ENCODE measurements at regions of chr22 and their contacts with region 1.

Region 1: DNA sequence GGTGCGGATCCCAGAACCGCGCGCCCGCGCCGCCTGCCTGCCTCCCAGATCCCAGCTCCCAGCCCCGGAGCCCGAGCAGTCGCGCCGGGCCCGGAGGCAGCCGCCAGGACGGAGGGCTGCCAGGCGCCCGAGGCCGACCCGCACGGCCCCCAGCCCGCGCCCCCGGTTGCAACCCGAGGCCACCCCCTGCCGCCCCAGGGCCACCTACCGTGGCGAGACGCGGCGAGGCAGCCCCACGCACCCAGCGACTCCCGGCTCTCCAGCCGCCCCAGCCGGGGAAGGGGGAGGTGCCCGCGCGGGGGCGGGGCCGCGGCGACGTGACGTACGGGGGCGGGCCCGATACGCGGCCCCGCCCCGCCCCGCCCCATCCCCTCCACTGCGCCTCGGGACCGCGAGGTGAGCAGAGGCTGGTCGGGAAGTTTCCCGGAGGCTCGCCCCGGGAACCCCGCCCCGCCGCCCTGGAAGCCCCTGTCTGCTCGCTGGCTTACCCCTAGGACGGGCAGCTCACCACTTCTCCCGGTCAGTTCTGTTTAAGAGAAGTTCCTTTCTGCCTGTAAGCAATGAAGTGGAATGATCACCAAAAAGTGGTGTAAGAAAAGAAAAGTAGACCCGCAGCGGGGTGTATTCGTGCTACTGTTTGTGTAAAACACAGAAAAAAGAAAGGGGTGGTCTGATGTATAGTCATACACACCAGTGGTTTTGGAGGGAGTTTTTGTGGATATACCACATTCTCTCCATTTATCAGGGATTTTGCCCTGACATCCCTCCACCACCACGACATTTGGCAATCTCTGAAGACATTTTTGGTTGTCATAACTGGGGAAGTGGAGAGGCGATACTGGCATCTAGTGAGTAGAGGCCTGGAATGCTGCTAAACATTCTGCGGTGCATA is at the start of gene TPST2:
- DNase-seq: peak; percentile 58 to 75
- ATAC-seq: peak; percentile 85 to 87
- H3K4me3 ChIP-seq: peak within 1 kb of the TSS; percentile 81 to 98 (median 96)
- H3K27ac ChIP-seq: peak within 1 kb of the TSS; percentile 93 to 97 (median 94)
- H3K4me1 ChIP-seq: peaks cover 18 to 19% of the 10 kb centered on the region in 2 donors
- H3K27me3 ChIP-seq: no peaks in the 10 kb centered on the region
- CTCF ChIP-seq: peak in 1 of 5 experiments; percentile 45
- POLR2A ChIP-seq: peak; percentile 96 to 97
- total RNA-seq, gene TPST2: 32.3 to 110 (median 65.4) TPM

Region 2: DNA sequence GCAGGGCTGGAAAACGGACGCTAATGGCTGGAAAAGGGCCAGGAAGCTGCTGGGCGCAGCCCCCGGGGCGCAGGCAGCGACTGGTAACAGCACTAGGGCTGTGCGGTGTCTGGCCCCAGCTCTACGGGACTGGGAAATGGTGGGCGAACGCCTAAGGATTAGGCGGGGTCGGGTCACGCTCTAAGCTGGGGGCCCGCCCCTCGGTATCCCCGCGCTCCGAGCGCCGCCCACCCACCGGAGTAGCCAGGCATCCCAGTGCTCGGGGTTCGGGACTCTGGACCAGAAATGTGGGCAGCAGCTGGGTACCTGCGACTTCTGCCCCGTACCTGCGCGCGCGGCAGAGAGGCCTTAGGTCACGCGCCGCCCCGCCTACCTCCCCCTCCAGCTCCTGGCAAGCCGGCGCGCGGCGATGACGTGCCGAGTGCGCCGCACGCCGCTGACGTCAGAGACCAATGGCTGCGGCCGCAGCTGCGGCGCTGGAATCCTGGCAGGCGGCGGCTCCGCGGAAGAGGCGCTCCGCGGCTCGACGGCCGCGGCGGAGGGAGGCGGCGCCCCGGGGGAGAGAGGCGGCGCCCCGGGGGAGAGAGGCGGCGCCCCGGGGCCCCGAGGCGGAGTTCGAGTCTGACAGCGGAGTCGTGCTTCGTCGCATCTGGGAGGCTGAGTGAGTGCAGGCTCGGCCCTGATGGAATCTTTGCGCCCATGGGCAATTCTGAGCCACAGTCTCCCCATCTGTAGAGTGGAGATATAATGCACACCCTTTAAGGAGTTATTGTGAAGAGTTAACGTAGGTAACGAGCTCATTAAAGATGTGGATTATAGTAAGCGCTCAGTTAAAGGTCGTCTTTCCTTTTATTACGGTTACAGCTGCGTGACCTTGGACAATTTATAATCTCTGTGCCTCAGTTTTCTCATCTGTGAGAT is 106.4 kb before region 1 on chr22 and contains the starts of genes HPS4 and SRRD:
- in situ Hi-C with region 1: loop called in 2 of 4 experiments (anchors 10 kb)
- intact Hi-C with region 1: loop called (anchors 1 kb)
- DNase-seq: peak; percentile 75 to 86
- ATAC-seq: peak; percentile 80 to 90
- H3K4me3 ChIP-seq: peak within 1 kb of the TSS; percentile 76 to 99 (median 86)
- H3K27ac ChIP-seq: peak within 1 kb of the TSS; percentile 93 to 100 (median 94)
- H3K4me1 ChIP-seq: peaks cover 54 to 60% of the 10 kb centered on the region in 2 donors
- H3K27me3 ChIP-seq: no peaks in the 10 kb centered on the region
- CTCF ChIP-seq: peak in 1 of 5 experiments; percentile 29
- POLR2A ChIP-seq: peak; percentile 95
- total RNA-seq, gene HPS4: 7.0 to 13.9 (median 10.5) TPM
- total RNA-seq, gene SRRD: 24.0 to 53.1 (median 27.4) TPM

Region 3: DNA sequence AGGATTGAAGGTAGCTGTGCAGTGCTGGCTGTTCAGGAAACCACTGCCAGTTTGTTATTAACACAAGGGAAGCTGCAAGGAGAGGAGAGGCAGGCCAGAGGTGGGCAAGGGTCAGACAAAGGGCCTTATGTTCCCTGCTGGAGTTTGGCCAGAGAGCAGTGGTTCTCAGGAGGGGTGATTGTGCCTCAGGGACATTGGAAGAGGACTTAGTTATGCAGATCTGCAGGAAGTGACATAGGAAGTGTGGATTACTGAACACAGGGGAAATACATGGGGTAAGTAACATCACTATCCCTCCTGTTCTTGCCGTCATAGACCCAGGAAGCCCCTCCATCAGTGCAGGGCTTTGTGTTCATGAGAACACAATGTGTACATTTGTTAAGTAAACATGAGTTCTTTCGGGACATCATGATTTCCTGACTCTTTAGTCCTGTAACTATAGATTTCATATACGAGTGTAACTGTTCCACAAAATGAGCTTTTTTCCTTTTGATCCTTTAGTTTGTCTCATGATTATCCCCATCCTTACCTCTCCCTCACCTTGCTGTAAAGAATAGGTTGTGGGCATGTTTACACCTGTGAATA is 100.6 kb before region 1 on chr22:
- in situ Hi-C with region 1: loop called in 3 of 4 experiments (anchors 10 kb)
- intact Hi-C with region 1: no loop called
- DNase-seq: no peak
- ATAC-seq: no peak
- H3K4me3 ChIP-seq: no peak overlapping the region
- H3K27ac ChIP-seq: peak overlapping the region in 1 of 4 donors; percentile 1
- H3K4me1 ChIP-seq: peaks cover 13 to 14% of the 10 kb centered on the region in 2 donors
- H3K27me3 ChIP-seq: no peaks in the 10 kb centered on the region
- CTCF ChIP-seq: no peak
- POLR2A ChIP-seq: no peak

Region 4: GRCh38 chr22:26502688-26503561 is 87.2 kb before region 1 on chr22:
- in situ Hi-C with region 1: loop called in 1 of 4 experiments (anchors 10 kb)
- intact Hi-C with region 1: loop called (anchors 2 kb)
- DNase-seq: peak; percentile 87 to 91
- ATAC-seq: peak; percentile 84 to 91
- H3K4me3 ChIP-seq: peak overlapping the region in 2 of 4 donors; percentile 22 to 32
- H3K27ac ChIP-seq: peak overlapping the region; percentile 84 to 94 (median 88)
- H3K4me1 ChIP-seq: peaks cover 34 to 53% of the 10 kb centered on the region in 2 donors
- H3K27me3 ChIP-seq: no peaks in the 10 kb centered on the region
- CTCF ChIP-seq: peak; percentile 46 to 67 (median 60)
- POLR2A ChIP-seq: no peak

Region 5: GRCh38 chr22:26563022-26563421 is 27.1 kb before region 1 on chr22:
- in situ Hi-C with region 1: no loop called
- intact Hi-C with region 1: loop called (anchors 2 kb)
- DNase-seq: peak in 1 of 2 donors; percentile 38
- ATAC-seq: peak in 1 of 2 donors; percentile 46
- H3K4me3 ChIP-seq: no peak overlapping the region
- H3K27ac ChIP-seq: peak overlapping the region; percentile 84 to 92 (median 88)
- H3K4me1 ChIP-seq: peaks cover 50 to 52% of the 10 kb centered on the region in 2 donors
- H3K27me3 ChIP-seq: no peaks in the 10 kb centered on the region
- CTCF ChIP-seq: peak in 1 of 5 experiments; percentile 13
- POLR2A ChIP-seq: no peak

Region 6: DNA sequence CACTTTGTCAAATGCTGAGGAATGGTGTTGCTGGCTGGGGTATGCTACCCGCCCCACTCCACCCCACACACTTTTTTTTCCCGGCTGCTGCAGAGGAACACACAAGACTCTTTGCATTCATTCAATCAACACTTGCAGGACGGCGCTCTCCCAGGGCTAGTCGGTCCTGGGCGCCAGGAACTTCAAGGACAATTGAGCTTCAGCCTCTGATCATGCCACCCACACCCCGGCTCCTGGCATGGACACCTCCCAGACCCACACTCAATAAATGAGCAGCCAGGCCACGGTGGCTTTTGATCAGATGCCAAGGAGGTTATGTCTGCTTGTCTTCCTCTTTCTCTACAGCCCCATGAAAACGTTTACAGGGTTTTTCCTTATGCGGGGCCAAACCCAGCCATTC is 20.0 kb before region 1 on chr22:
- in situ Hi-C with region 1: no loop called
- intact Hi-C with region 1: loop called (anchors 2 kb)
- DNase-seq: no peak
- ATAC-seq: no peak
- H3K4me3 ChIP-seq: no peak overlapping the region
- H3K27ac ChIP-seq: peak overlapping the region; percentile 13 to 29 (median 18)
- H3K4me1 ChIP-seq: peaks cover 9 to 29% of the 10 kb centered on the region in 2 donors
- H3K27me3 ChIP-seq: no peaks in the 10 kb centered on the region
- CTCF ChIP-seq: no peak
- POLR2A ChIP-seq: no peak

Region 7: DNA sequence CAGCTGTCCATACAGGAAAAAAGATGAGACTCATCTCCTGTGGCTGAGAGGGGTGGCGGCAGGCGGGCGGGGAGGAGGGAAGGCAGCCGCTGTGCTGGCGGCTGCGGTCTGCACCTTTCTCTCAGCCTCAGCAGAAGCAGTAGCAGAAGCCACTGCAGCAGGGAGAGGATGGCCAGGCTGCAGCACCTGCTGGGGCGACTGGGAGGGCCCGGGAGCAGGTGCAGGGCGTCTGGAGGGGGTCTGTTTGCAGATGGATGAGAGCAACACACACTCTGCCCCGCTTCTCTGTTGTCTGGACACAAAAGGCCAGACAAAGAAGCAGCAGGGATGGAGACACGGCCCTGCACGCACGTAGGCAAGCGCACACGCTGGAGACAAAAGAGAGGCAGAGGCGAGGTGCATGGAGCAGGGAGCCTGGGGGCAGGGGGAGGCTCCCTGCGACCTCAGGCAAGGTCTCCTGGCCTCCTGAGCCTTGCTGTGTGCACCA is 58.0 kb after region 1 on chr22:
- in situ Hi-C with region 1: no loop called
- intact Hi-C with region 1: no loop called
- DNase-seq: no peak
- ATAC-seq: no peak
- H3K4me3 ChIP-seq: no peak overlapping the region
- H3K27ac ChIP-seq: no peak overlapping the region
- H3K4me1 ChIP-seq: peaks cover 0 to 8% of the 10 kb centered on the region in 2 donors
- H3K27me3 ChIP-seq: peaks cover 0 to 6% (median 0%) of the 10 kb centered on the region in 3 donors
- CTCF ChIP-seq: no peak
- POLR2A ChIP-seq: no peak

Region 8: GRCh38 chr22:26756675-26757293 is 166.7 kb after region 1 on chr22:
- in situ Hi-C with region 1: no loop called
- intact Hi-C with region 1: no loop called
- DNase-seq: no peak
- ATAC-seq: peak; percentile 33 to 70
- H3K4me3 ChIP-seq: peak overlapping the region in 1 of 4 donors; percentile 32
- H3K27ac ChIP-seq: no peak overlapping the region
- H3K4me1 ChIP-seq: peaks cover 0 to 3% of the 10 kb centered on the region in 2 donors
- H3K27me3 ChIP-seq: no peaks in the 10 kb centered on the region
- CTCF ChIP-seq: peak; percentile 79 to 95 (median 88)
- POLR2A ChIP-seq: no peak

Measured in gastrocnemius medialis (tissue), 4 donors.